ENCODE measurements at regions of chr9 and their contacts with region 1.

Region 1: DNA sequence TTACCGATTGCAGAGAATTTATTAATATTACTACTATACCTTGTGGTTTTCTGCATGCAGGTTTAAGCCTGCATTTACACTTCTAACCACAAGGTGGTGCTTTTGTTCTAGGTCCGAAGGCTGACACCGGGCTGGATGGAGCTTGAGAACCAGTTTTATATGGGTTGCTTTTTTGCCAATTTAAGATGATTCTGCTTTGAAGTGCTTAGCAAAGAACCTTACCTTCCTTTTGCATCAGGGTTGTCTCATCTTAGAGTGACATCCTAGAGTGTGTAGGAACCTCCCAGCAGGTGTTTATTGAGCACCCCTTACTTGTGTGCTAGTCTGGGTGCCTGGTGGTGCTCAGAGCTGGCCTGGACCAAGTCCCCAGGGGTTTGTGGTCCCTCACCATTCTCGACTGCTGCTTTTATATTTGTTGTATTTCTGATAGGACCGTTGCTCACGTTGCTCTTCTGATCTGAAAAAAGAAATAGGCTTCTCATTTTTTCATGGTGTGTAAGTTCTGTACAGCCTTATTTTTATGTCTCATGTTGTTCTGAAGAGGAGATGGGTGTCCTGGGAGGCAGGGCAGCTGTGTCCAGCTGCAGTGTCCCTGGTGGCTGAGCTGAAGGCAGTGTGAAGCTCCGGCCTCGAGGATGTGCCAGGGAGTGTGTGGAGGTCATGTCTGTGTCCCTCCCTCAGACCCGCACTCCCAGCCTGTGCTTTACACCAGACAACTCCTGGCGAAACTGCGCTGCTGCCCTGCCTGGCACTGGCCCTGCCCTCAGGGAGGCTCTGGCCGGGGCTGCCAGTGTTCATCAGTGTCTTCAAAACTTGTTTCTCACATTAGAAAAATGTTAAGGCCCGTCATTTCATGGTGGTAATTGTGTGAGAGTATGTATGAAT is 54.3 kb downstream of the EHMT1 start:
- DNase-seq: peak; percentile 36
- ATAC-seq: peak; percentile 81
- H3K4me3 ChIP-seq: no peak overlapping the region
- H3K27ac ChIP-seq: no peak overlapping the region
- H3K4me1 ChIP-seq: no peaks in the 10 kb centered on the region
- H3K27me3 ChIP-seq: no peaks in the 10 kb centered on the region
- CTCF ChIP-seq: peak; percentile 70 to 85 (median 83)
- POLR2A ChIP-seq: no peak
- RAD21 ChIP-seq: peak; percentile 80

Region 2: DNA sequence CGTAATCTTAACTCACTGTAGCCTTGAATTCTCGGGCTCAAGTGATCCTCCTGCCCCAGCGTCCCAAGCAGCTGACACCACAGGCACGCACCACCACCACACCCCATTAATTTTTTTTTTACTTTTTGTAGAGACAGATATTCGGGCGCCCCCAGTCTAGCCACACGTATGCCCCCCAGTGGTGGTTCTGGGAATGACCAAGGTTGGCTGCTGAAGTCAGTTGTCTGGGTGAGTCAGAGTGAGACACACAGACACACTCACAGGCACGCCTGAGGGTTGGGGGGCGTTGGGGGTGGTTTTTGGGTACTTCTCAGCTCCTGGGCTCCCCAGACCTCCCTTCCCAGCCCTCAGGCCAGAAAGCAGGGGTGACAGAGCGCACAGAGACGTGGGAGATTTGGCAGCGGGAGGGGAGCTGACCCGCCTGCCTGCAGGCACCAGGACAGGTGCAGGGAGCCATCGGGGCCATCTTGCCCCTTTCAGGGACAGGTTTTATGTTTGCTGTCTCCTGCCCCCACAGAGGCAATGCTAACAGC is 227.8 kb before region 1 on chr9:
- CTCF ChIA-PET with region 1: no interaction called
- POLR2A ChIA-PET with region 1: no interaction called
- RAD21 ChIA-PET with region 1: no interaction called
- intact Hi-C with region 1: no loop called
- DNase-seq: peak; percentile 56
- ATAC-seq: peak; percentile 65
- H3K4me3 ChIP-seq: peak overlapping the region; percentile 4 to 17; a peak in 1 of 4 replicates
- H3K27ac ChIP-seq: no peak overlapping the region; the same call in 1 of the 2 replicates
- H3K4me1 ChIP-seq: peaks cover 16 to 33% of the 10 kb centered on the region in 2 experiments
- H3K27me3 ChIP-seq: no peaks in the 10 kb centered on the region
- CTCF ChIP-seq: peak; percentile 77 to 93 (median 88)
- POLR2A ChIP-seq: no peak
- RAD21 ChIP-seq: peak; percentile 84

Region 3: GRCh38 chr9:137772281-137772873 is 99.2 kb after region 1 on chr9:
- CTCF ChIA-PET with region 1: interaction called, 3 read pairs
- POLR2A ChIA-PET with region 1: no interaction called
- RAD21 ChIA-PET with region 1: no interaction called
- intact Hi-C with region 1: loop called (anchors 1 kb)
- DNase-seq: no peak
- ATAC-seq: peak; percentile 69
- H3K4me3 ChIP-seq: no peak overlapping the region
- H3K27ac ChIP-seq: no peak overlapping the region
- H3K4me1 ChIP-seq: no peaks in the 10 kb centered on the region
- H3K27me3 ChIP-seq: no peaks in the 10 kb centered on the region
- CTCF ChIP-seq: peak; percentile 29 to 56 (median 40); a peak in 4 of 6 replicates
- POLR2A ChIP-seq: no peak
- RAD21 ChIP-seq: peak; percentile 49

Region 4: GRCh38 chr9:138022121-138022741 is 349.1 kb after region 1 on chr9:
- CTCF ChIA-PET with region 1: no interaction called
- POLR2A ChIA-PET with region 1: no interaction called
- RAD21 ChIA-PET with region 1: no interaction called
- intact Hi-C with region 1: loop called (anchors 5 kb)
- DNase-seq: peak; percentile 40
- ATAC-seq: peak; percentile 77
- H3K4me3 ChIP-seq: peak overlapping the region; percentile 47 to 62
- H3K27ac ChIP-seq: peak overlapping the region; percentile 79
- H3K4me1 ChIP-seq: peaks cover 0 to 9% of the 10 kb centered on the region in 2 experiments; a peak in 1 of 4 replicates
- H3K27me3 ChIP-seq: no peaks in the 10 kb centered on the region
- CTCF ChIP-seq: peak; percentile 39 to 85 (median 68); a peak in 5 of 6 replicates
- POLR2A ChIP-seq: no peak
- RAD21 ChIP-seq: peak; percentile 58

Measured in HCT116 (cell line).